HEK293 (cell line): ENCODE measurements at regions of chrX and their contacts with region 1.

Region 1: DNA sequence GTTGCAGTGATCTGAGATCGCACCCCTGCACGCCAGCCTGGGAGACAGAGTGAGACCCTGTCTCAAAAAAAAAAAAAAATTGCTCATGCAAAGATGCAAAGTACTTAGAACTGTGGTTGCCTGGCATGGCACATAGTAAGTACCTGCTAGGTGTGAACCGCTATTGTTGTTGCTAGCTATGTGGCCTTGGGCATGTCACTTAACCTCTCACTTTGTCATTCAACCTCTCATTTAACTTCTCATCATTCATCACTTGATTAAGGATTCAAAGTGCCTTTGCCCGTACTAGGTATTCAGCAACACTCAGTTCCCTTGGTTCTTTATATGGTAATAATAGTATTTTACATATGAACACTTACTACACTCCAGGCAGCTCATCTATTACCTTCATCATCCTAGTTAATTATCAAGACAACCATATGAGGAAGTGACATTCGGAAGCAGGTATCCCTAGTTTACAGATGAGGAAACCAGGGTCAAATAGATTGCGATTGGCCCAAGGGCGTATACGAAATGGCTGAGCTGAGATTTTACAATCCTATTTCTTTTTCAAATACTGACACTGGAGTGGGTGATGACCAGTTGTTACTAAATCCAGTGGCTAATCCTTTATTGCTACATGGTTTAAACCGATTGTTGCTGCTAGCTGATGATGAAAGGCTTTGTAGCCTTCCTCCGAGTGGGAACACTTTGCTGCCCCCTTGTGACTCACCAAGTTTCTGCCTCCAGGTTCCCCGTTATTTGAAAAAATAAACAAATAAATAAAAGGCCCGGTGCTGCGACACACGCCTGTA is 28.8 kb upstream of the SOWAHD start:
- H3K4me3 ChIP-seq: no peak overlapping the region
- H3K27ac ChIP-seq: no peak overlapping the region
- H3K4me1 ChIP-seq: no peaks in the 10 kb centered on the region
- CTCF ChIP-seq: no peak

Region 2: DNA sequence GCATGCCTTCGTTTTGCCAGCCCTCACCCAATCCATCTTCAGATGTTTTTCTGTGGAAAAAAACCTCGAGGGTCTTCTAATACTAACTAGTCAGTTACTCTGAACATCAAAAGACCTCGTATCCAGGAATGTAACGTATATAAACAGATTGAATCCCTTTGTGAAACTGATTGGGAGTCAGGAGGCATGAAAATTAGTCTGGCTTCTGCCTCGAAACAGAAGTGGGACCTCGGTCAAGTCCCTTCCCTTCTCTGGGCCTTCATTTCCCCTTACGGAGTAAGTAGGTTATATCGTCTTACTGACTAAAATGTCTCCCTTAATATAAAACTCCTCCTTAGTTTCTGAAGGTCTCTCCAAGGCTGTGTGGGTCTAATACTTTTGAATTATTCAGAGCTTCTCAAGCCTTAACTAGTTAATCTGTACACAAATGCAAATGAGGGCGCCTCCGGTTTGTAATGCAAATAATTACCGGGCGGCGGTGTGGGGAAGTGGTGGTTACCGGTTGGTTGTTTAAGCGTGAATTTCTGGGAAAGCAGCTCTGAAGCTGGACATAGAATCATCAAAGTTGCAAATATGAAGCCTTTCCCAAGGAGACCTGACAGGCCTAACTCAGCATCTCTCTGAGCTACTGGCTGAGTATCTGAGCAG is 112.0 kb before region 1 on chrX:
- CTCF ChIA-PET with region 1: interaction called, 11 read pairs
- POLR2A ChIA-PET with region 1: no interaction called
- H3K4me3 ChIP-seq: no peak overlapping the region
- H3K27ac ChIP-seq: no peak overlapping the region
- H3K4me1 ChIP-seq: peaks cover 4% of the 10 kb centered on the region; the same call in 1 of the 2 replicates
- CTCF ChIP-seq: no peak

Region 3: DNA sequence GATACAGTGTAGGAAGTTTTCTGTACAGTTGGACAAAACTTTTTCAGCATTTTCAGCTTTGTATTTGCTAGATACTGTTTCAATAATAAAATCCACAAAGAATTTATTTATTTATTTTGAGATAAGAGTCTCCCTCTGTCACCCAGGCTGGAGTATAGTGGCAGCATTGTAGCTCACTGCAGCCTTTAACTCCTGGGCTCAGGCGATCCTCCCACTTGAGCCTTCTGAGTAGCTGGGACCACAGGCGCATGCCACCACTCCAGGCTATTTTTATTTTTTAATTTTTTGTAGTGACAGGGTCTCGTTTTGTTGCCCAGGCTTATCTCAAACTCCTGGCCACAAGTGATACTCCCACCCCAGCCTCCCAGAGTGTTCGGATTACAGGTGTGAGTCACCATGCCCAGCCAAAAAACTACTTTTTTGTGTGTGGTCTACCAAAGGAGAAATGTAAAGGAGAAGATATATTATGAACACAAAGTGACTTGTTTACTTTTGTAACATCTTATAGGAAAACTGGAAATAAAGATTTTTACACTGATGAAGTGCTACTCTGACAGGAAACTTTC is 15.8 kb after region 1 on chrX:
- CTCF ChIA-PET with region 1: interaction called, 18 read pairs
- POLR2A ChIA-PET with region 1: interaction called, 4 read pairs
- H3K4me3 ChIP-seq: no peak overlapping the region
- H3K27ac ChIP-seq: no peak overlapping the region
- H3K4me1 ChIP-seq: no peaks in the 10 kb centered on the region
- CTCF ChIP-seq: no peak

Region 4: DNA sequence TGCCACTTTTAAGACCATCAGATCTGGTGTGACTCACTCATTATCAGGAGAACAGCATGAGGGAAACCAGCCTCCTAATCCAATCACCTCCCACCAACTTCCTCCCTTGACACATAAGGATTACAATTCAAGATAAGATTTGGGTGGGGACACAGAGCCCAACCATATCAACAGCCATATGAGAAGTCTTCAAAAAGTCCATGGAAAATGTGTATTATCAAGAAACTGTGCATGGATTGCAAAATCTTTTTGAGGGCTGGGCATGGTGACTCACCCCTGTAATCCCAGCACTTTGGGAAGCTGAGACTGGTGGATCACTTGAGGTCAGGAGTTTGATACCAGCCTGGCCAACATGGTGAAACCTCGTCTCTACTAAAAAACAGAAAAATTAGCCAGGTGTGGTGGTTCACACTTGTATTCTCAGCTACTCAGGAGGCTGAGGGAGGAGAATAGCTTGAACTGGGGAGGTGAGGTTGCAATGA is 79.6 kb after region 1 on chrX:
- CTCF ChIA-PET with region 1: no interaction called
- POLR2A ChIA-PET with region 1: no interaction called
- H3K4me3 ChIP-seq: no peak overlapping the region
- H3K27ac ChIP-seq: no peak overlapping the region
- H3K4me1 ChIP-seq: no peaks in the 10 kb centered on the region
- CTCF ChIP-seq: no peak